Calu3 (cell line): ENCODE measurements at regions of chr2 and their contacts with region 1.

Region 1: DNA sequence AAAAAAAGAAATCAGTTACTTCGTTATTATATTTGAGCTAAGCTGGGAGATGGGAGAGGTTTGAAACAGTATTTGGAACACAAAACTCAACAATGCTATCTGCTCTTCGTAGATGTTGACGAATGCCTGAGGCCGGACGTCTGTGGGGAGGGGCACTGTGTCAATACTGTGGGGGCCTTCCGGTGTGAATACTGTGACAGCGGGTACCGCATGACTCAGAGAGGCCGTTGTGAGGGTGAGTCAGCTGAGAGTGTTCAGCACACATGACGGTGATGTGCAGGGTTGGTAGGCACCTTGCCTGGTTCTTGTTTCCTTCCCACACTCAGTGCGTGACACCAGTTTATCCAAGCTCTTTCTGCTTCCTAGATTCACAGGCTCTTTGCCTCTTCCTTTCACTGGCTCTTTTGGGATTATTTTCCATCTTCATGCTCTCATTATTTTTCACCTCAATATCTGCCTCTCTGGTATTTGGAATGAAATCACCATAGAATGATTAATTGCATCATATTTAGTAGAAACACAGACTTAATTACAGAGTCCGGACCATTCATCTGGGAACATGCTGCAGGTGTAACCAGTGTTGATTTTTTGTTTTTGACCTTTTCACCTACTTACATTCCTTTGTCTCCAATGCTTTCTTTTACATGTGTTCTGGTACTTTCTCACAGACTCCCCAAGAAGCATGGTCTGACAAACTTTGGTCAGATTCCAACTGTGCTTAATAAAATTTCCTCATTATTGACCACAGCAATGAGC is 200.6 kb upstream of the RASGRP3 start:
- DNase-seq: peak; percentile 89
- H3K4me3 Mint-ChIP-seq: peak overlapping the region; percentile 31
- H3K27ac Mint-ChIP-seq: peak overlapping the region; percentile 98
- H3K4me1 Mint-ChIP-seq: peaks cover 40% of the 10 kb centered on the region
- H3K27me3 Mint-ChIP-seq: no peaks in the 10 kb centered on the region
- CTCF ChIP-seq: no peak

Region 2: GRCh38 chr2:33210626-33211025 is 65.2 kb before region 1 on chr2:
- CTCF ChIA-PET with region 1: interaction called, 4 read pairs
- intact Hi-C with region 1: loop called (anchors 5 kb)
- DNase-seq: peak; percentile 36
- H3K4me3 Mint-ChIP-seq: no peak overlapping the region
- H3K27ac Mint-ChIP-seq: peak overlapping the region; percentile 61
- H3K4me1 Mint-ChIP-seq: peaks cover 30% of the 10 kb centered on the region
- H3K27me3 Mint-ChIP-seq: no peaks in the 10 kb centered on the region
- CTCF ChIP-seq: no peak